HEK293 (cell line): ENCODE measurements at regions of chr13 and their contacts with region 1.

Region 1: DNA sequence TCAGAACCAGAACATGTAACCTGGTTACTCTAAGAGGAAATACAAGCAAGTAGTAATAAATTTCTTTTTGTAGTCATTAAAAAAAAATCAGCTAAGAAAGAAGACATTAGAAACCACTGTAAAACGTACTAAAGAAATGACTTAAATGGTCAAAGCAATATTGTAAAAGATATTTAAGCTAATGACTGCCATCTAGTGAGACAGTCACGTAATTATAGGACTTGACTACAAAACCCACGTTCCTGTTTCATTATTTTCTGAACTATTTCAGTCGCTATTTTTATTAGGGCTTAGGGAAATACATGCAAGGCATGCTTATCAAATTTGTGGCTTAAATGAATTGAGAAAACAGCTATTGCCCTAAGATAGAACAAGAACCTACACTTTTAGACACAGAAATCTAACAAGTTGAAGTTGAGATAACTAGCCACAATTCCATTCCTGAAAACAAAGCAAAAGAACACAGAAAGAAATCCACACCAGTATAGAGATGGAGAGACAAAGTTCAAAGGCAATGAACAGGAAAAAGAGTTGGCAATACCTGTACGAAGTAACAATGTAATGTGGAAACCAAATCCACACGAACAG is 17.9 kb downstream of the ALG5 start:
- H3K4me3 ChIP-seq: no peak overlapping the region
- H3K27ac ChIP-seq: no peak overlapping the region
- H3K4me1 ChIP-seq: no peaks in the 10 kb centered on the region
- CTCF ChIP-seq: no peak

Region 2: DNA sequence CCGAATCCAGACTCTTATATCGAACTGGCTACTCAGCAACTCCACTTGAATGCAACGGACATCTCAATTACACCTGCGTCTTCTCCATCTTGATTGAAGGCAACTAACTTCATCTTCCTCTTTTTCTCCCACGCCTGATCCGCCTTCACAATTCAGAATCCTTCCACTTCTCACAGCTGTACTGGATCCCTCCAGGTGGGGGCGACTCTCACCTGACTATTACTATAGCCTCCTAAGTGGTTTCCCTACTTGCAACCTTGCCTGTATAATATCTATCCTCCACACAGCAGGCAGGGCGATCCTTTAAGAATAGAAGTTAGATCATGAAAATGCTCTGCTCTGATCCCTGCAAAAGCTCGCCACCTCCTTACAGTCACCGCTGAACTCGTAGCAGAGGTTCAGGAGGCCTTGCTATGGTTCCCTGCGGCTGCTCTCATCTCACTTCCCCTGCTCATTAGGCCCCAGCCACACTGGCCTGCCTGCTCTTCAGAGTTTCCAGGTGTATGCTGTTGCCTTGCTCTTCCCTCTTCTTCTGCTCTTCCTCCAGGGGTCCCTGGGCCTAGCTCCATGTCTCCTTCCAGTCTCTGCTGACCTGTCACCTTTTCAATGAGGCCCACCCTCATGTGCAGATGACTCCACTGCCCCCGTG is 130.3 kb before region 1 on chr13:
- CTCF ChIA-PET with region 1: interaction called, 66 read pairs
- POLR2A ChIA-PET with region 1: no interaction called
- H3K4me3 ChIP-seq: no peak overlapping the region
- H3K27ac ChIP-seq: no peak overlapping the region
- H3K4me1 ChIP-seq: no peaks in the 10 kb centered on the region
- CTCF ChIP-seq: no peak

Region 3: GRCh38 chr13:36858290-36858689 is 123.0 kb before region 1 on chr13:
- CTCF ChIA-PET with region 1: interaction called, 66 read pairs
- POLR2A ChIA-PET with region 1: no interaction called
- H3K4me3 ChIP-seq: no peak overlapping the region
- H3K27ac ChIP-seq: no peak overlapping the region
- H3K4me1 ChIP-seq: no peaks in the 10 kb centered on the region
- CTCF ChIP-seq: no peak

Region 4: GRCh38 chr13:37118016-37118415 is 136.8 kb after region 1 on chr13:
- CTCF ChIA-PET with region 1: no interaction called
- POLR2A ChIA-PET with region 1: no interaction called
- H3K4me3 ChIP-seq: no peak overlapping the region
- H3K27ac ChIP-seq: no peak overlapping the region
- H3K4me1 ChIP-seq: no peaks in the 10 kb centered on the region
- CTCF ChIP-seq: no peak